GM12878 (cell line): ENCODE measurements at regions of chr12 and their contacts with region 1.

Region 1: GRCh38 chr12:38138225-38139221 is 178.1 kb upstream of the ALG10B start:
- DNase-seq: peak; percentile 23
- ATAC-seq: peak; percentile 73
- H3K4me3 ChIP-seq: no peak overlapping the region
- H3K27ac ChIP-seq: no peak overlapping the region
- H3K4me1 ChIP-seq: no peaks in the 10 kb centered on the region
- H3K27me3 ChIP-seq: no peaks in the 10 kb centered on the region
- CTCF ChIP-seq: peak; percentile 82 to 94 (median 88)
- EP300 ChIP-seq: no peak
- POLR2A ChIP-seq: no peak
- RAD21 ChIP-seq: peak; percentile 81

Region 2: DNA sequence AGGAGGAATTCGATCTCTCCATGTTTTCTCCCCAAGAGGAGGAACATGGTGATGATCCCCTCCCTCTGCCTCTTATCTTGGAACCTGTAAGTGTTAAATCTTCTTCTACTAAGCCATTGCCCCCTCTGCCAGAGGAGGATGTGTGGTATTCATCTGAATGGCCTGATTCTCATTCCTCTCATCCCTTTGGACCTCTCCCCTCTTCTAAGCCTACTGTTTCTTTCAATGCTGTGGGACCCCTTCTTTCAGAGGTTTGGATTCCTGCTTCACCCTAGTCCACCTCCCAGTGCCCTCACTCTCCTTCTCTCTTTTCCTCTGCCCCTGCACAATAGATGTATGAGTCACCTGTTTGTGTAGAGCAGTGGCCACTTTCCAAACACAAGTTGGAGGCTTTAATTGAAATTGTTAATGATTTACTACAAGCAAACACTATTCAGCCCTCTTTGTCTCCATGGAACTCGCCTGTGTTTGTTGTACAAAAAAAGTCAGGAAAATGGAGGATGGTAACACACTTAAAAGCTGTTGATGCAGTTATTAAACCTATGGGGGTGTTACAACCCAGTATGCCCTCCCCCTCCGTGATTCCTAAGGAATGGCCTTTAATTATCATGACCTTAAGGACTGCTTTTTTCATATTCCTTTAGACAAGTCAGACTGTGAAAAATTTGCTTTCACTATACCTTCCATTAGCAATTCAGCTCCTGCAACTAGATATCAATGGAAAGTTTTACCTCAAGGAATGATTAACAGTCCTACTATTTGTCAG is 14.1 kb before region 1 on chr12:
- CTCF ChIA-PET with region 1: interaction called, 5 read pairs
- POLR2A ChIA-PET with region 1: no interaction called
- RAD21 ChIA-PET with region 1: interaction called, 4 read pairs
- SMC1A ChIA-PET with region 1: interaction called, 10 read pairs
- in situ Hi-C with region 1: no loop called
- intact Hi-C with region 1: no loop called
- DNase-seq: no peak
- ATAC-seq: no peak
- H3K4me3 ChIP-seq: no peak overlapping the region
- H3K27ac ChIP-seq: no peak overlapping the region
- H3K4me1 ChIP-seq: no peaks in the 10 kb centered on the region
- H3K27me3 ChIP-seq: no peaks in the 10 kb centered on the region
- CTCF ChIP-seq: no peak
- EP300 ChIP-seq: no peak
- POLR2A ChIP-seq: no peak
- RAD21 ChIP-seq: no peak

Region 3: GRCh38 chr12:38180108-38180507 is 41.6 kb after region 1 on chr12:
- CTCF ChIA-PET with region 1: no interaction called
- POLR2A ChIA-PET with region 1: no interaction called
- RAD21 ChIA-PET with region 1: no interaction called
- SMC1A ChIA-PET with region 1: no interaction called
- in situ Hi-C with region 1: no loop called
- intact Hi-C with region 1: loop called (anchors 5 kb)
- DNase-seq: no peak
- ATAC-seq: no peak
- H3K4me3 ChIP-seq: no peak overlapping the region
- H3K27ac ChIP-seq: no peak overlapping the region
- H3K4me1 ChIP-seq: no peaks in the 10 kb centered on the region
- H3K27me3 ChIP-seq: no peaks in the 10 kb centered on the region
- CTCF ChIP-seq: no peak
- EP300 ChIP-seq: no peak
- POLR2A ChIP-seq: no peak
- RAD21 ChIP-seq: no peak

Region 4: DNA sequence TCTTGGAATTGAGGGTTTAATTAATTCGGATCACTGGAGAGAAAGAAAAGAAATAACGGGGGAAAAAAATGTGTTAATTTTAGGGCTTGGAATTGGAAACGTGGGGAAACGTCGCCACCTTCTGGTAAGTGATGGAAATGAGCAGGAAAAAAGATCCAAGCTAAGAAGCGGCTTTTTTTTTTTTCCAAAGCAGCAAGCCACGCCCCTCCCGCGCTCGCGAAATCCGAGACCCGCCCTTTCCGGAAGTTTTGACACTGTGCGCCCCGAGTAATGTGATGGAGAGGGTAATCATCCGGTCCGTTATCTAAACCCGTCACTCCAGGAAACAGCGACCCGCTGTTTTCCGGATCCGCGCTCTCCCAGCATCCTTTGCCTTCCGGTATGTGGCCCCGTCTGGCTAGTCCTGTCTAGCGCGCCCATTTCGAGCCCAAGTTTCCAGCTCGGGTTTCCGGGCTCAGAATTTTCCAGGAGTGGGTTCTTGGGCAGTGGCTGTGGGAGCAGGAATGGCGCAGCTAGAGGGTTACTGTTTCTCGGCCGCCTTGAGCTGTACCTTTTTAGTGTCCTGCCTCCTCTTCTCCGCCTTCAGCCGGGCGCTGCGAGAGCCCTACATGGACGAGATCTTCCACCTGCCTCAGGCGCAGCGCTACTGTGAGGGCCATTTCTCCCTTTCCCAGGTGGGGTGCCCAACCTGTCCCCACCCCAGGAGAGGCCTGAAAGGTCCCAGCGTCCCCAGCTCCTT is 178.0 kb after region 1 on chr12 and contains the start of gene ALG10B:
- CTCF ChIA-PET with region 1: interaction called, 27 read pairs
- POLR2A ChIA-PET with region 1: no interaction called
- RAD21 ChIA-PET with region 1: interaction called, 6 read pairs
- SMC1A ChIA-PET with region 1: interaction called, 4 read pairs
- in situ Hi-C with region 1: loop called (anchors 5 kb)
- intact Hi-C with region 1: loop called (anchors 1 kb)
- DNase-seq: peak; percentile 84
- ATAC-seq: peak; percentile 100
- H3K4me3 ChIP-seq: peak within 1 kb of the TSS; percentile 86
- H3K27ac ChIP-seq: peak within 1 kb of the TSS; percentile 73
- H3K4me1 ChIP-seq: no peaks in the 10 kb centered on the region
- H3K27me3 ChIP-seq: no peaks in the 10 kb centered on the region
- CTCF ChIP-seq: peak; percentile 53 to 61 (median 58); a peak in 5 of 6 replicates
- EP300 ChIP-seq: no peak
- POLR2A ChIP-seq: peak; percentile 73
- RAD21 ChIP-seq: peak; percentile 73
- polyA plus RNA-seq, gene ALG10B: 2.0 to 4.5 TPM

Region 5: GRCh38 chr12:38638406-38638805 is 499.9 kb after region 1 on chr12:
- CTCF ChIA-PET with region 1: no interaction called
- POLR2A ChIA-PET with region 1: no interaction called
- RAD21 ChIA-PET with region 1: no interaction called
- SMC1A ChIA-PET with region 1: no interaction called
- in situ Hi-C with region 1: loop called (anchors 25 kb)
- intact Hi-C with region 1: no loop called
- DNase-seq: no peak
- ATAC-seq: no peak
- H3K4me3 ChIP-seq: no peak overlapping the region
- H3K27ac ChIP-seq: no peak overlapping the region
- H3K4me1 ChIP-seq: no peaks in the 10 kb centered on the region
- H3K27me3 ChIP-seq: no peaks in the 10 kb centered on the region
- CTCF ChIP-seq: no peak
- EP300 ChIP-seq: no peak
- POLR2A ChIP-seq: no peak
- RAD21 ChIP-seq: no peak

Region 6: GRCh38 chr12:39272871-39273770 is 1134.6 kb after region 1 on chr12:
- CTCF ChIA-PET with region 1: interaction called, 6 read pairs
- POLR2A ChIA-PET with region 1: no interaction called
- RAD21 ChIA-PET with region 1: no interaction called
- SMC1A ChIA-PET with region 1: no interaction called
- in situ Hi-C with region 1: loop called (anchors 5 kb)
- intact Hi-C with region 1: loop called (anchors 5 kb)
- DNase-seq: no peak
- ATAC-seq: peak; percentile 61
- H3K4me3 ChIP-seq: no peak overlapping the region
- H3K27ac ChIP-seq: no peak overlapping the region
- H3K4me1 ChIP-seq: no peaks in the 10 kb centered on the region
- H3K27me3 ChIP-seq: no peaks in the 10 kb centered on the region
- CTCF ChIP-seq: peak; percentile 56 to 64 (median 59)
- EP300 ChIP-seq: no peak
- POLR2A ChIP-seq: no peak
- RAD21 ChIP-seq: peak; percentile 78

Region 7: DNA sequence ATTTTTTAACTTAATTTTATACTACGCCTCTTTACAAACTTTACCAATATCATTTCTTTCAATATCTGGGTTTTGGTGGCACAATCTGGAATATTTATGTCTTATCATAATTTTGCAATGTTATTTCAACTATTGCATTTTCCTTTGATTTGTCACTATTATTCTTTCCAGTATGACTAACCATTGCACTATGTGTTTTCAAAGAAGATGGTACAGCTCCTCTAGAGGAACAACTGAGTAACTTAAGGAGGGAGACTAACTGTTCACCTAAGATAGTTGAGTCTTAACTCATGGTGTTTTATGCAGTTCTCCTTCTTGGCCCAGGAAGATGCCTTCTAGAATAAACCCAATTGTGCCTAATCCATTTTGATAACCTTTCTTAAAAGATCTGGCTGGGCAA is 1364.9 kb after region 1 on chr12:
- CTCF ChIA-PET with region 1: no interaction called
- POLR2A ChIA-PET with region 1: no interaction called
- RAD21 ChIA-PET with region 1: no interaction called
- SMC1A ChIA-PET with region 1: no interaction called
- in situ Hi-C with region 1: loop called (anchors 25 kb)
- intact Hi-C with region 1: no loop called
- DNase-seq: no peak
- ATAC-seq: 0 out of 3 replicates have a peak, but pooled peaks have one; percentile 39
- H3K4me3 ChIP-seq: no peak overlapping the region
- H3K27ac ChIP-seq: no peak overlapping the region
- H3K4me1 ChIP-seq: no peaks in the 10 kb centered on the region
- H3K27me3 ChIP-seq: no peaks in the 10 kb centered on the region
- CTCF ChIP-seq: no peak
- EP300 ChIP-seq: no peak
- POLR2A ChIP-seq: no peak
- RAD21 ChIP-seq: no peak